ENCODE measurements at regions of chr16 and their contacts with region 1.

Region 1: DNA sequence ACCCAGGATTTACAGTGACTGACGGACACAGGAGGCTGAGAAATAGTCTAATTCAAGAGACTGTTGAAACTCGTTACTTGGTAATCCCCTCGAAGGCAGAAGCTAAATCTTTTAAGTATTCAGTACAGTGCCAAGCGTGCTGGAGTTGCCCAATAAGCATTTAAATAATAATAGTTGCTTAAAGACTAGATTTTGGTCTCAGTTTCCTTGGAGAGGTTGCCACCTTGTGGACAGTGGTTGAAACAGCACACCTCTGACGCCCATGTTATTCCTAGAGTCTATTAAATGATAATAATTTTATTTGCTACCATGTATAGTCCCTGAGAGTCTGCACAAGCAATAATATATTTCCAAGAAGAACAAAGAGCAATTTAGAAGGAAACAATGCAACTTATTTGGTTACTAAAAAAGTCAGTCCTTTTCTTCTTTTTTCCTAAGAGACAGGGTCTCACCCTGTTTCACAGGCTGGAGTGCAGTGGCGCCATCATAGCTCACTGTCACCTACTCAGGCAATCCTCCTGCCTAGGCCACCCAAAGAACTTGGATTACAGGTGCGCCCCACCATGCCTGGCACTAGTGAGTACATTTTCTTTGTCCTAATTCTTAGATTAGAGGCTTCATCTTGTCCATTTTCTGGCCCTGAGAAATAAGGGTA is 138.0 kb upstream of the NUDT7 start:
- DNase-seq: peak; percentile 46 to 52
- H3K4me3 ChIP-seq: no peak overlapping the region
- H3K4me3 Mint-ChIP-seq: no peak overlapping the region
- H3K27ac Mint-ChIP-seq: no peak overlapping the region
- H3K4me1 ChIP-seq: no peaks in the 10 kb centered on the region
- H3K4me1 Mint-ChIP-seq: no peaks in the 10 kb centered on the region
- H3K27me3 ChIP-seq: no peaks in the 10 kb centered on the region
- H3K27me3 Mint-ChIP-seq: peaks cover 2% of the 10 kb centered on the region
- CTCF ChIP-seq: peak; percentile 87 to 91

Region 2: GRCh38 chr16:77353587-77354263 is 230.6 kb before region 1 on chr16:
- CTCF ChIA-PET with region 1: interaction called, 5 read pairs
- POLR2A ChIA-PET with region 1: no interaction called
- intact Hi-C with region 1: loop called (anchors 5 kb)
- DNase-seq: peak; percentile 54 to 61
- H3K4me3 ChIP-seq: no peak overlapping the region
- H3K4me3 Mint-ChIP-seq: no peak overlapping the region
- H3K27ac Mint-ChIP-seq: no peak overlapping the region
- H3K4me1 ChIP-seq: peaks cover 42% of the 10 kb centered on the region
- H3K4me1 Mint-ChIP-seq: peaks cover 29% of the 10 kb centered on the region
- H3K27me3 ChIP-seq: no peaks in the 10 kb centered on the region
- H3K27me3 Mint-ChIP-seq: no peaks in the 10 kb centered on the region
- CTCF ChIP-seq: no peak

Region 3: DNA sequence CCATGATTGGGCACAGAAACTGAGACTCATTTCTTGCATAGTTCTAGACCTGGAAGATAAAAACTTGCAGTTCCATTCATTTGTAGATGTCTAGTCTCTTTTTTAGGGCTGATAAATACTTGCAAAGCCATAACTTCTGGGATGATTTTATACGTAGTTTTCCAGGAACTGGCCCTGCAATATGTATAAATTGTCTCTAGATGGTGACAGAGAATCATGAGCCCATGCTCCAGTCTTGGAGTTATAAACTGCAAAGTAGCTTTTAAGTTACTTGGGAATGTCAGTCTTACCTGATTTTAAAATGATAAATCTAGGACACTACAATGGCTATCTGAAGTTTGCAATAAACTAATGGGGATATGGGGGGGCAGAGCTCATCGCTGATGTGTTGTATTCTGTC is 146.5 kb before region 1 on chr16:
- CTCF ChIA-PET with region 1: interaction called, 4 read pairs
- POLR2A ChIA-PET with region 1: no interaction called
- intact Hi-C with region 1: loop called (anchors 1 kb)
- DNase-seq: no peak
- H3K4me3 ChIP-seq: no peak overlapping the region
- H3K4me3 Mint-ChIP-seq: no peak overlapping the region
- H3K27ac Mint-ChIP-seq: no peak overlapping the region
- H3K4me1 ChIP-seq: 0 out of 2 replicates have a peak, but pooled peaks cover 8% of the 10 kb centered on the region
- H3K4me1 Mint-ChIP-seq: peaks cover 32% of the 10 kb centered on the region
- H3K27me3 ChIP-seq: no peaks in the 10 kb centered on the region
- H3K27me3 Mint-ChIP-seq: peaks cover 6% of the 10 kb centered on the region
- CTCF ChIP-seq: no peak

Region 4: GRCh38 chr16:77660311-77660710 is 76.0 kb after region 1 on chr16:
- CTCF ChIA-PET with region 1: no interaction called
- POLR2A ChIA-PET with region 1: no interaction called
- intact Hi-C with region 1: loop called (anchors 5 kb)
- DNase-seq: peak in 1 of 2 experiments; percentile 38
- H3K4me3 ChIP-seq: no peak overlapping the region
- H3K4me3 Mint-ChIP-seq: no peak overlapping the region
- H3K27ac Mint-ChIP-seq: no peak overlapping the region
- H3K4me1 ChIP-seq: no peaks in the 10 kb centered on the region
- H3K4me1 Mint-ChIP-seq: peaks cover 6% of the 10 kb centered on the region
- H3K27me3 ChIP-seq: no peaks in the 10 kb centered on the region
- H3K27me3 Mint-ChIP-seq: peaks cover 17% of the 10 kb centered on the region
- CTCF ChIP-seq: peak; percentile 68 to 85

Measured in Caco-2 (cell line).